Transverse colon (tissue), 4 donors: ENCODE measurements at regions of chr7 and their contacts with region 1.

Region 1: DNA sequence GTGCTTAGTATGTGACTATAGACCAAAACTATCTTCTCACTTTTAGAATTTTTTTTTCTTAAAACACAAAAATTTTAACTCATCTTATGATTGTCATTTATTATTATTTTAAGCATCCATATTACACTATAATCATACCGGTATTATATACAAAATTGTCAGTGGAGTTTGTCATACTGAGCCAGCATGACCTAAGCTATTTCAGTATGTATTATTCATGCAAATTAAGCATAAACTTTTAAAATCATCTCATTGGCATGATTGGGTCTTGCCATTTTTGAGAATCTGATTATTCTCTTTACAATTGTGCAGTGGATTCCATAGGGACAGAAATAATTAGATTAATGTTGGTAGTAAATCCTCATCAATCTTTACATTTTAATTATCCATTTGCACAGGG is 46.2 kb upstream of the STMP1 start:
- DNase-seq: no peak
- H3K4me3 ChIP-seq: no peak overlapping the region
- H3K27ac ChIP-seq: no peak overlapping the region
- H3K4me1 ChIP-seq: no peaks in the 10 kb centered on the region
- H3K27me3 ChIP-seq: no peaks in the 10 kb centered on the region
- CTCF ChIP-seq: no peak
- EP300 ChIP-seq: no peak
- POLR2A ChIP-seq: no peak

Region 2: DNA sequence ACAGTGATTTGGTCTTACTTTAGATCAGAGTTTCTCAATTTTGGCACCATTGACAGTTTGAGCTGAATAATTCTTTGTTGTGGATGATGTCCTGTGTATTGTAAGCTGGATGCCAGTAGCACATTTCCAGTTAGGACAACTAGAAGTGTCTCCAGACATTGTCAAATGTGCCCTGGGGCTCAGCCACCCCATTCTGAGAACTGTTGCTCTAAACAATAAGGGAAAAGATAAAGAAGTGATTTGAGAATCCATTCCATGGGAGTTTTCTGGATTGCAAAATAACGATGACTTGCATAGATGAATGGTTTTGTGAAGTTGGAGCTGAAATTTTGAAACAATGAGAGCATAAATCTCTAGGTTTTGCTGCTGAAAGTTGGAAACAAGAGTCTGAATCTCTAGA is 13.8 kb before region 1 on chr7:
- in situ Hi-C with region 1: no loop called
- intact Hi-C with region 1: loop called (anchors 1 kb)
- DNase-seq: no peak
- H3K4me3 ChIP-seq: no peak overlapping the region
- H3K27ac ChIP-seq: no peak overlapping the region
- H3K4me1 ChIP-seq: no peaks in the 10 kb centered on the region
- H3K27me3 ChIP-seq: no peaks in the 10 kb centered on the region
- CTCF ChIP-seq: no peak
- EP300 ChIP-seq: no peak
- POLR2A ChIP-seq: no peak

Region 3: GRCh38 chr7:135994466-135995205 is 378.5 kb after region 1 on chr7:
- in situ Hi-C with region 1: no loop called
- intact Hi-C with region 1: no loop called
- DNase-seq: no peak
- H3K4me3 ChIP-seq: no peak overlapping the region
- H3K27ac ChIP-seq: no peak overlapping the region
- H3K4me1 ChIP-seq: no peaks in the 10 kb centered on the region
- H3K27me3 ChIP-seq: no peaks in the 10 kb centered on the region
- CTCF ChIP-seq: no peak
- EP300 ChIP-seq: no peak
- POLR2A ChIP-seq: no peak

Region 4: DNA sequence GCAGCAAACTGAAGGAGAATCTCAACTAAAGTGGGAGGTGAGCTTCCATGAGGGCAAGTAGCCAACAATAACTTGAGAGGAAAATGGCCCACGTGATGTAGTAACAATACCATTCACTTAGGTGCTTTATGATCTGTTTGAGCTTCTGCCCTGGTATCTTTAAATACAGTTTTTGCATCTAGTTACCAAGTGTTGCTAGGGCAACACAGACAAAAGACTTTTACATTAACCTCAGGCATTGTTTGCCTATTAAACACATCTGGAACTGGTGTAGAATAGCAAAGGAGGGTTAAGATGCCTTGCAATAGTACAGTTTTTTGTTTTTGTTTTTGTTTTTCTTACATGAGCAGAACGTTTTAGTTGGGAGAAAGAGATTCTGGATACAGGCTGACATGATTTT is 458.7 kb after region 1 on chr7:
- in situ Hi-C with region 1: no loop called
- intact Hi-C with region 1: no loop called
- DNase-seq: no peak
- H3K4me3 ChIP-seq: no peak overlapping the region
- H3K27ac ChIP-seq: no peak overlapping the region
- H3K4me1 ChIP-seq: no peaks in the 10 kb centered on the region
- H3K27me3 ChIP-seq: no peaks in the 10 kb centered on the region
- CTCF ChIP-seq: no peak
- EP300 ChIP-seq: no peak
- POLR2A ChIP-seq: no peak